Activated CD4-positive, alpha-beta T cell treated with anti-CD3 and anti-CD28 coated beads, Interleukin-2, amount 10 ng/mL, durations not matched to agents 7 days and 5 days (primary cell): ENCODE measurements at regions of chr2 and their contacts with region 1.

Region 1: GRCh38 chr2:33494155-33494779 is 17.8 kb downstream of the RASGRP3 start:
- DNase-seq: no peak
- H3K4me3 Mint-ChIP-seq: no peak overlapping the region
- H3K27ac Mint-ChIP-seq: no peak overlapping the region
- H3K4me1 Mint-ChIP-seq: peaks cover 48% of the 10 kb centered on the region
- H3K27me3 Mint-ChIP-seq: no peaks in the 10 kb centered on the region

Region 2: GRCh38 chr2:33475224-33476130 is 18.8 kb before region 1 on chr2:
- CTCF ChIA-PET with region 1: interaction called, 14 read pairs
- POLR2A ChIA-PET with region 1: interaction called, 3 read pairs
- DNase-seq: peak; percentile 91
- H3K4me3 Mint-ChIP-seq: peak overlapping the region; percentile 98
- H3K27ac Mint-ChIP-seq: peak overlapping the region; percentile 100
- H3K4me1 Mint-ChIP-seq: peaks cover 38% of the 10 kb centered on the region
- H3K27me3 Mint-ChIP-seq: no peaks in the 10 kb centered on the region

Region 3: GRCh38 chr2:33673937-33674336 is 179.7 kb after region 1 on chr2:
- CTCF ChIA-PET with region 1: no interaction called
- POLR2A ChIA-PET with region 1: no interaction called
- DNase-seq: no peak
- H3K4me3 Mint-ChIP-seq: no peak overlapping the region
- H3K27ac Mint-ChIP-seq: no peak overlapping the region
- H3K4me1 Mint-ChIP-seq: no peaks in the 10 kb centered on the region
- H3K27me3 Mint-ChIP-seq: no peaks in the 10 kb centered on the region